ENCODE measurements at regions of chr1 and their contacts with region 1.

Region 1: GRCh38 chr1:88180449-88181108 is 503.5 kb upstream of the PKN2 start:
- DNase-seq: peak; percentile 81
- ATAC-seq: peak; percentile 99
- H3K4me3 ChIP-seq: no peak overlapping the region
- H3K4me3 Mint-ChIP-seq: no peak overlapping the region
- H3K27ac ChIP-seq: no peak overlapping the region
- H3K27ac Mint-ChIP-seq: no peak overlapping the region
- H3K4me1 ChIP-seq: peaks cover 0 to 3% of the 10 kb centered on the region in 2 donors
- H3K4me1 Mint-ChIP-seq: peaks cover 5% of the 10 kb centered on the region
- H3K27me3 ChIP-seq: no peaks in the 10 kb centered on the region
- H3K27me3 Mint-ChIP-seq: peaks cover 20% of the 10 kb centered on the region
- CTCF ChIP-seq: peak; percentile 98

Region 2: GRCh38 chr1:87292684-87293493 is 887.7 kb before region 1 on chr1:
- CTCF ChIA-PET with region 1: interaction called, 8 read pairs
- POLR2A ChIA-PET with region 1: no interaction called
- intact Hi-C with region 1: loop called (anchors 2 kb)
- DNase-seq: peak; percentile 78
- ATAC-seq: peak; percentile 47
- H3K4me3 ChIP-seq: no peak overlapping the region
- H3K4me3 Mint-ChIP-seq: no peak overlapping the region
- H3K27ac ChIP-seq: no peak overlapping the region
- H3K27ac Mint-ChIP-seq: no peak overlapping the region
- H3K4me1 ChIP-seq: no peaks in the 10 kb centered on the region
- H3K4me1 Mint-ChIP-seq: no peaks in the 10 kb centered on the region
- H3K27me3 ChIP-seq: no peaks in the 10 kb centered on the region
- H3K27me3 Mint-ChIP-seq: peaks cover 13% of the 10 kb centered on the region
- CTCF ChIP-seq: peak; percentile 96

Region 3: DNA sequence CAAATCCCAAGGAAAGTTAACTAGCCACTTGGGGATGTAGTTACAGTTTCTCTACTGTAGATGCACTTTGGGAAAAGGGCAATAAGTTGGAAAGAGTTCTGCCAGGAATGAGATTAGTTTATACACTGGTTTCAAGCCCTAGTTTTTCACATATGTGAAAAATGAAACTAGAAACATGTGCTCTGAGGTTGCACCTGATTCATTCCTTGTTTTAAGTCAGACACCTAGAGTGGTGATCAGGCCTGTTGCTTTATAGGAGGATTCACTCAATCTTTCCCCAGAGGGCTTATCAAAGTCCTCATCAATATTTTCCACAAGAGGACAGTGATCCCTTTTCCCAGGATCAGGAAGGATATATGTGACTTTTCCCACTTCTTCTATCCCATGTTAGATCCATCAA is 12.5 kb before region 1 on chr1:
- CTCF ChIA-PET with region 1: interaction called, 26 read pairs
- POLR2A ChIA-PET with region 1: no interaction called
- intact Hi-C with region 1: no loop called
- DNase-seq: no peak
- ATAC-seq: no peak
- H3K4me3 ChIP-seq: no peak overlapping the region
- H3K4me3 Mint-ChIP-seq: no peak overlapping the region
- H3K27ac ChIP-seq: no peak overlapping the region
- H3K27ac Mint-ChIP-seq: no peak overlapping the region
- H3K4me1 ChIP-seq: no peaks in the 10 kb centered on the region
- H3K4me1 Mint-ChIP-seq: no peaks in the 10 kb centered on the region
- H3K27me3 ChIP-seq: peaks cover 0 to 6% (median 0%) of the 10 kb centered on the region in 4 experiments
- H3K27me3 Mint-ChIP-seq: peaks cover 39% of the 10 kb centered on the region
- CTCF ChIP-seq: no peak

Region 4: GRCh38 chr1:88200545-88200944 is 20.0 kb after region 1 on chr1:
- CTCF ChIA-PET with region 1: interaction called, 18 read pairs
- POLR2A ChIA-PET with region 1: interaction called, 3 read pairs
- intact Hi-C with region 1: no loop called
- DNase-seq: no peak
- ATAC-seq: no peak
- H3K4me3 ChIP-seq: no peak overlapping the region
- H3K4me3 Mint-ChIP-seq: no peak overlapping the region
- H3K27ac ChIP-seq: no peak overlapping the region
- H3K27ac Mint-ChIP-seq: no peak overlapping the region
- H3K4me1 ChIP-seq: no peaks in the 10 kb centered on the region
- H3K4me1 Mint-ChIP-seq: no peaks in the 10 kb centered on the region
- H3K27me3 ChIP-seq: no peaks in the 10 kb centered on the region
- H3K27me3 Mint-ChIP-seq: peaks cover 4% of the 10 kb centered on the region
- CTCF ChIP-seq: no peak

Region 5: GRCh38 chr1:88239205-88239604 is 58.6 kb after region 1 on chr1:
- CTCF ChIA-PET with region 1: interaction called, 11 read pairs
- POLR2A ChIA-PET with region 1: no interaction called
- intact Hi-C with region 1: no loop called
- DNase-seq: no peak
- ATAC-seq: no peak
- H3K4me3 ChIP-seq: no peak overlapping the region
- H3K4me3 Mint-ChIP-seq: no peak overlapping the region
- H3K27ac ChIP-seq: no peak overlapping the region
- H3K27ac Mint-ChIP-seq: no peak overlapping the region
- H3K4me1 ChIP-seq: no peaks in the 10 kb centered on the region
- H3K4me1 Mint-ChIP-seq: no peaks in the 10 kb centered on the region
- H3K27me3 ChIP-seq: no peaks in the 10 kb centered on the region
- H3K27me3 Mint-ChIP-seq: no peaks in the 10 kb centered on the region
- CTCF ChIP-seq: no peak

Region 6: DNA sequence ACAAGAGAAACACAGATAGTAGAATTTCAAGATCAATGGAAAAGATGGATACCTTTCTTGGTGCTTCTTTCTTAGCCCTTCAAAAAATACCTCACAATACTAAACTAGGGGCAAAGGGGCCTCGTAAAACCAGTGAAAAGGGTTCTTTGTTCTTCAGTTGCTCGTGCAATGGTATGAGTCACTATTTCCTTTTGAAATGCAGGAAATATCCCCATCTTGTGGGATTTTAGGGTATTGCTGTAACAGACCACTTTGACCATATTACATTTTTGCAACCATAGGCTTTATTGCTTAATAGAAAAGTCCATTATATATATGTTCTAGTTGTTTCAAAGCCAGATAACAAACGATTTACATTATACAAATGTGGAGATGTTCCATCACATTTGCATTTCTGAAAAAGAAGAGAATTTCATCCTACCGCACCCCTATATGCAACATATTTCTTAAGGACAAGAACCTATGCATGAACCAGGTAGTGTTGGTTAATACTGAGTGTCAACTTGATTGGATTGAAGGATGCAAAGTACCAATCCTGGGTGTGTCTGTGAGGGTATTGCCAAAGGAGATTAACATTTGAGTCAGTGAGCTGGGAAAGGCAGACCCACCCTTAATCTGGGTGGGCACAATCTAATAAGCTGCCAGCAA is 414.9 kb after region 1 on chr1:
- CTCF ChIA-PET with region 1: interaction called, 16 read pairs
- POLR2A ChIA-PET with region 1: no interaction called
- intact Hi-C with region 1: no loop called
- DNase-seq: peak; percentile 39
- ATAC-seq: no peak
- H3K4me3 ChIP-seq: no peak overlapping the region
- H3K4me3 Mint-ChIP-seq: no peak overlapping the region
- H3K27ac ChIP-seq: no peak overlapping the region
- H3K27ac Mint-ChIP-seq: no peak overlapping the region
- H3K4me1 ChIP-seq: no peaks in the 10 kb centered on the region
- H3K4me1 Mint-ChIP-seq: no peaks in the 10 kb centered on the region
- H3K27me3 ChIP-seq: no peaks in the 10 kb centered on the region
- H3K27me3 Mint-ChIP-seq: no peaks in the 10 kb centered on the region
- CTCF ChIP-seq: peak; percentile 68

Measured in B cell (primary cell).